PC-9 (cell line): ENCODE measurements at regions of chr18 and their contacts with region 1.

Region 1: DNA sequence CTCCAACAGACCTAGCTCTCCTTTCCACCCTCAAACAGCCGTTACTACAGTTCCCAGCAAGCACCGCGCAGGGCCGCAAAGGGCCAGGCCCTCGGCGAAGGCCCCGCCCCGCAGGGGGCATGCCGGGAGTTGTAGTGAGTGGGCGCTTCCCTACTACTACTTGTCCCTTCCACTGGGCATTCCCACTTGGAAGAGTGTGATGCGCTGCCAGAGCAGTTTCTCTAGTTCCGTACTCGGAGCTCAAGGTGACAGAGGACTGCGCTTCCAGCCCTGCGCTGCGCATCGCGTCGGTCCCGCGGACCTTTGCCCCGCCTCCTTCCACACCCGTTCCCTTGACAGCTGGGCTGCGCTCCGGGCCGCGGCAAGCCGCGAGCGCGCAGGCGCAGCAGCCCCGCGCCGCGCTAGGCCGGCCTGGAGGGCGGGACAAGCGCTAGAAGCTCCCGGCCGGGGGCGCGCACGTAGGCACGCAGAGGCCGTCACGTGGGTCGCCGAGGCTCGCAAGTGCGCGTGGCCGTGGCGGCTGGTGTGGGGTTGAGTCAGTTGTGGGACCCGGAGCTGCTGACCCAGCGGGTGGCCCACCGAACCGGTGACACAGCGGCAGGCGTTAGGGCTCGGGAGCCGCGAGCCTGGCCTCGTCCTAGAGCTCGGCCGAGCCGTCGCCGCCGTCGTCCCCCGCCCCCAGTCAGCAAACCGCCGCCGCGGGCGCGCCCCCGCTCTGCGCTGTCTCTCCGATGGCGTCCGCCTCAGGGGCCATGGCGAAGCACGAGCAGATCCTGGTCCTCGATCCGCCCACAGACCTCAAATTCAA is at the start of gene VAPA:
- DNase-seq: peak; percentile 78 to 97
- H3K4me3 ChIP-seq: peak within 1 kb of the TSS; percentile 99
- H3K27ac ChIP-seq: peak within 1 kb of the TSS; percentile 90
- H3K4me1 ChIP-seq: peaks cover 39% of the 10 kb centered on the region
- H3K27me3 ChIP-seq: no peaks in the 10 kb centered on the region
- CTCF ChIP-seq: no peak
- total RNA-seq, gene VAPA: 340 and 359 TPM in 2 replicates

Region 2: DNA sequence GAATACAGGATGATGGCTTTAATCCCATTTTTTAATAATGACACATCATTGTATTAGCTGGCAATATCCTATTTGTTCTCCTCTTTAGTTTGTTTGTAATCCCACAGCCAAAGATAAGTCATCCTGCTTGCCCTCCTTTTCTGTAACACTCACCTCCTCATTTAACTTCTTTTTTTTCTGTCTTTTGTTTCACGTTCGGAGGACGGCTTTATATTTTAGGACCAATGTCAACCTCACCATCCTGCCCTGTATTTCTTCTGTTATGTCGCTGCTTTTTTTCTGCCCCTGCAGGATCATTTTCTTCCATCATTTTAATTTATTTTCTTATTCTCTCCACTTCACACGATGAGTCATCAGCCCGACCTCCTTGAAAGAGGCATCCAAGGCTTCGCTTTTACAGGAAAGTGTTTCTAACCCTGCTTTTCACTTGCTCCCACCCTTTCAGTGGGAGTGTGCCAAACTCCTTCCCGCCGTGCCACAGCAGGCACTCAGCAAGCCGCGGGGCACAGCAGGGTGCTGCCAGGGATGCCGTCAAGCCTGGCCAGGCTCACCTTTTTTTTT is 194.2 kb before region 1 on chr18:
- CTCF ChIA-PET with region 1: no interaction called
- POLR2A ChIA-PET with region 1: no interaction called
- intact Hi-C with region 1: loop called (anchors 5 kb)
- DNase-seq: peak; percentile 78 to 82
- H3K4me3 ChIP-seq: peak overlapping the region; percentile 24; the same call in 1 of the 2 replicates
- H3K27ac ChIP-seq: peak overlapping the region; percentile 76
- H3K4me1 ChIP-seq: peaks cover 39% of the 10 kb centered on the region
- H3K27me3 ChIP-seq: no peaks in the 10 kb centered on the region
- CTCF ChIP-seq: no peak

Region 3: GRCh38 chr18:9743200-9744016 is 170.3 kb before region 1 on chr18:
- CTCF ChIA-PET with region 1: no interaction called
- POLR2A ChIA-PET with region 1: no interaction called
- intact Hi-C with region 1: no loop called
- DNase-seq: peak; percentile 94 to 96
- H3K4me3 ChIP-seq: peak overlapping the region; percentile 27
- H3K27ac ChIP-seq: peak overlapping the region; percentile 96
- H3K4me1 ChIP-seq: peaks cover 59% of the 10 kb centered on the region
- H3K27me3 ChIP-seq: no peaks in the 10 kb centered on the region
- CTCF ChIP-seq: no peak

Region 4: DNA sequence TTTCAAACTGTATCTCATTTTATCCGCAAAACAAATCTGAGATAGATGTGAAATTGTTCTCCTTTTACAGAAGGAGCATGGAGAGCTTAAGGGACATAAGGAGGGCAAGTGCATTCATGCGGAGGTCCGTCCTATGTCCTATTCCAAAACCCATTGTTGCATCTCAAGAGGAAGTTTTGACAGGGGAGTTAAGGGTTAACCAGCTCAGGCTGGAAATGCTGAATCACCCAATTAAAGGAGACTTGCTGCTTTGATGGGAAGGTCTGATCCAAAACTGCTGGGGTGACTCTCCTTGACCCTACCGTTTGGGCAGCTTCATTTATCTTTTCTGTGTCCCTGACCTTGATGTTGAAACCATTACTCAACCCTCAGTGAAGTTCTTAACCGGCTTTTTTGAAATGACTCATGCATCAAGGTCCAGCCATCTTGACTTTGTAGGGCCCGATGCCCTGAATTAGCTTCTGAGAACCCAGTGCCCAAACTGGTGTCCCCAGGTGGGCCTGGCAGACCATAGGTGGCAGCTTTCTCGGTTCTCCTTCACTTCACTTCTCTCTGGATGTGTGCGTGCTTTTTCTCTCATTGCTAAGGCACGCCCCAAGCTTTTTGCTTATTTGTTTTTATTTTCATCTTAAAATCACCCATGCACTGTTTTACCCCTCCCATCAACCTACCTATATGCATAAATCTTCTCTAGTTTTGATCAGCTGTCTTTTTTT is 43.9 kb before region 1 on chr18:
- CTCF ChIA-PET with region 1: no interaction called
- POLR2A ChIA-PET with region 1: interaction called, 9 read pairs
- intact Hi-C with region 1: loop called (anchors 2 kb)
- DNase-seq: peak; percentile 40 to 84
- H3K4me3 ChIP-seq: no peak overlapping the region; the same call in 1 of the 2 replicates
- H3K27ac ChIP-seq: peak overlapping the region; percentile 93
- H3K4me1 ChIP-seq: peaks cover 50% of the 10 kb centered on the region
- H3K27me3 ChIP-seq: no peaks in the 10 kb centered on the region
- CTCF ChIP-seq: no peak

Region 5: GRCh38 chr18:9898792-9899549 is 14.8 kb before region 1 on chr18:
- CTCF ChIA-PET with region 1: no interaction called
- POLR2A ChIA-PET with region 1: interaction called, 18 read pairs
- intact Hi-C with region 1: no loop called
- DNase-seq: peak; percentile 56 to 99
- H3K4me3 ChIP-seq: no peak overlapping the region
- H3K27ac ChIP-seq: peak overlapping the region; percentile 73
- H3K4me1 ChIP-seq: peaks cover 25% of the 10 kb centered on the region
- H3K27me3 ChIP-seq: no peaks in the 10 kb centered on the region
- CTCF ChIP-seq: no peak